Activated CD4-positive, alpha-beta T cell treated with anti-CD3 and anti-CD28 coated beads for 36 hours (primary cell): ENCODE measurements at regions of chr2 and their contacts with region 1.

Region 1: GRCh38 chr2:54820558-54820957 is 97.1 kb downstream of the EML6 start:
- DNase-seq: no peak
- ATAC-seq: no peak
- H3K4me3 Mint-ChIP-seq: no peak overlapping the region
- H3K27ac Mint-ChIP-seq: no peak overlapping the region
- H3K4me1 Mint-ChIP-seq: no peaks in the 10 kb centered on the region
- H3K27me3 Mint-ChIP-seq: peaks cover 5% of the 10 kb centered on the region

Region 2: GRCh38 chr2:54803783-54804751 is 16.5 kb before region 1 on chr2:
- CTCF ChIA-PET with region 1: no interaction called
- POLR2A ChIA-PET with region 1: no interaction called
- intact Hi-C with region 1: loop called in 1 of 2 experiments (anchors 2 kb)
- DNase-seq: no peak
- ATAC-seq: no peak
- H3K4me3 Mint-ChIP-seq: no peak overlapping the region
- H3K27ac Mint-ChIP-seq: no peak overlapping the region
- H3K4me1 Mint-ChIP-seq: no peaks in the 10 kb centered on the region
- H3K27me3 Mint-ChIP-seq: no peaks in the 10 kb centered on the region

Region 3: GRCh38 chr2:54977149-54977548 is 156.6 kb after region 1 on chr2:
- CTCF ChIA-PET with region 1: no interaction called
- POLR2A ChIA-PET with region 1: no interaction called
- intact Hi-C with region 1: no loop called
- DNase-seq: no peak
- ATAC-seq: no peak
- H3K4me3 Mint-ChIP-seq: no peak overlapping the region
- H3K27ac Mint-ChIP-seq: no peak overlapping the region
- H3K4me1 Mint-ChIP-seq: peaks cover 34% of the 10 kb centered on the region
- H3K27me3 Mint-ChIP-seq: no peaks in the 10 kb centered on the region

Region 4: DNA sequence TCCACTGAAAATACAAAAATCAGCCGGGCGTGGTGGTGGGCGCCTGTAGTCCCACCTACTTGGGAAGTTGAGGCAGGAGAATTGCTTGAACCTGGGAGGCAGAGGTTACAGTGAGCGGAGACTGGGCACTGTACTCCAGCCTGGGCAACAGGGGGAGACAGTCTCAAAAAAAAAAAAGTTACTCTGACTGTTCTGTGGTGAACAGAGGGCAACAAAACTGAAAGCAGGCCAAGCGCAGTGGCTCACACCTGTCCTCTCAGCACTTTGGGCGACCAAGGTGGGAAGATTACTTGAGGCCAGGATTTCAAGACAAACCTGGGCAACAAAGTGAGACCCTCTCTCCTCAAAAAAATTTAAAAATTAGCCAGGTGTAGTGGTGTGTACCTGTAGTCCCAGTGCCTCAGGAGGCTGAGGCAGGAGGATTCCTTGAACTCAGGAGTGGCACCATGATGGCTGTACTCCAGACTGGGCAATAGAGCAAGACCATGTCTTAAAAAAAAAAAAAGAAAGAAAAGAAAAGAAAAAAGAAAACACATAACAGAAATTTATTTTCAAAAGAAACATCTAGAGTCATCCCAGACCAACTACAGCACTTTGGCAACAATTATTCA is 243.3 kb after region 1 on chr2:
- CTCF ChIA-PET with region 1: no interaction called
- POLR2A ChIA-PET with region 1: no interaction called
- intact Hi-C with region 1: no loop called
- DNase-seq: peak; percentile 8
- ATAC-seq: peak; percentile 57
- H3K4me3 Mint-ChIP-seq: no peak overlapping the region
- H3K27ac Mint-ChIP-seq: no peak overlapping the region
- H3K4me1 Mint-ChIP-seq: peaks cover 3% of the 10 kb centered on the region
- H3K27me3 Mint-ChIP-seq: no peaks in the 10 kb centered on the region